ENCODE measurements at regions of chr3 and their contacts with region 1.

Region 1: GRCh38 chr3:128969993-128970739 is 23.7 kb downstream of the CFAP92 start:
- DNase-seq: peak; percentile 72
- H3K4me3 Mint-ChIP-seq: no peak overlapping the region
- H3K27ac Mint-ChIP-seq: no peak overlapping the region
- H3K4me1 Mint-ChIP-seq: peaks cover 3% of the 10 kb centered on the region
- H3K27me3 Mint-ChIP-seq: no peaks in the 10 kb centered on the region

Region 2: DNA sequence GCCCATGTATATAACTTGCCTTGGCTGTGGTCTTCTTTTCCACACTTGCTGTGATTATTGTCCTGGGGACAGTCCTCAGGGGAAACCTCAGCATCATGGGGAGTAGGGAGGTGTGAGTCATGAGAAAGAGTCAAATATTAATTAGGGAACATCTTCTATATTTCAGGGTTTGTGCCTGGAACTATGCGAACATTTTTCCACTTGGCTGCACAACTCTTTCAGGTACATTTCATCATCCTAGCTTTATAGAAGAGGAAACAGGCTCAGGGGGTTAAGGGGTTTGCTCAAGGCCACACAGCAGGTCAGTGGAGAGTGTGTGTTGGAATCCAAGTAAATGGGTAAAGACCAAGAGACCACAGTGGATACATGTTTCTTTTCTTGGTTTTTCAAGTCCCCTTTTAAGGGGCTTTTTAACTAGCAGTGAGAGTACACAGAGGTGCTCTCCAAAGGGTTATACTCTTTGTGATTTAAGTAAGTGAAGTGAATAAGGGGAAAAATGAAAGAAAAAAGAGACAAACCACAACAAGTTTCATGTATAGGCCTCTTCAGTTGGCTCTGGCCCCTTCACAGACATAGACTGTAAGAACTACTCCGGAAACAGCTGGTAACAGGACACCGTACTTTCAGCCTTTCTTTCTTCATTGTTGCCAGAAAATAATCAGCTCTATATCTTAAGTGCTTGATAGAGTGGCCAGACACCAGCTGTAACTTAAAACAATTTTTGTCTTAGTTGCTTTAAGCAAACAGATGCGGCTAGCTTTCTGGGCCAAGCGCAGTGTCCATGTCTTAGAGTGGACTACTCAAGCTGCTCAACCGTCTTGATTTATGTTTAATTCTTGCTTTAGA is 752.2 kb before region 1 on chr3:
- CTCF ChIA-PET with region 1: no interaction called
- POLR2A ChIA-PET with region 1: no interaction called
- intact Hi-C with region 1: no loop called
- DNase-seq: no peak
- H3K4me3 Mint-ChIP-seq: no peak overlapping the region
- H3K27ac Mint-ChIP-seq: no peak overlapping the region
- H3K4me1 Mint-ChIP-seq: peaks cover 7% of the 10 kb centered on the region
- H3K27me3 Mint-ChIP-seq: no peaks in the 10 kb centered on the region

Region 3: DNA sequence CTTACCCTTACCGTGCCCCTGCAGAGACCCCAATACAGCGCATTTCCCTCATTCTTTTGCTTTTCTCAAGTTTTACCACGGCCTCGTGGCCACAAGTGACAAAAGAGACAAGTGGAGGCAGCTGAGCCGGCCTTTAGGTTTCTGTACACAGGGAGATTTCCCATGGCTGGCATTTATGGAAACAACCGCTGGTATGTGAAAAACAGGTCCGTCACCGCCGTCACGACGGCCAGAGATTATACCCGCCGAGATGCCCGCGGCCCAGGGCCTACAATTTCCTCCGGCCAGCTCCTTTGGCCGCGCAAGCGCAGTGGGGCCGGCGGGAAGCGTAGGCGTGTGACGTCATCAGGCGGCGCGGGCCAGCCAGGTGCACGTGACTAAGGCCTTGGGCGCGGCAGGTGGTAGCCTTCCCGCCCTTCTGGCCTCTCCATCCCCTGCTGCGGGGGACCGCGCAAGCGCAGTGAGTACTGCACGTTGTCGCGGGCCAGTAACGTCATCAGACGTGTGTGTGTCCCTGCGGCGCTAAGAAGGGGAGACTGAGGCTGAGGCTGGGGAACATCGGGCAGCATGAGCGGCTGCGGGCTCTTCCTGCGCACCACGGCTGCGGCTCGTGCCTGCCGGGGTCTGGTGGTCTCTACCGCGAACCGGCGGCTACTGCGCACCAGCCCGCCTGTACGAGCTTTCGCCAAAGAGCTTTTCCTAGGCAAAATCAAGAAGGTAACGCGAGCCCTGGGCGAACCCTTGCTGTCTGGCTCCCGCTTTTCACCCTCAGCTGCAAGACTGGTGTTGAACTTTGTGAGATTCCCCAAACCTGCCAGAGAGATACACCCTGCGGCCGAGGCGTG is 90.8 kb before region 1 on chr3 and contains the start of gene ACAD9:
- CTCF ChIA-PET with region 1: interaction called, 20 read pairs
- POLR2A ChIA-PET with region 1: interaction called, 4 read pairs
- intact Hi-C with region 1: no loop called
- DNase-seq: peak; percentile 98
- H3K4me3 Mint-ChIP-seq: peak within 1 kb of the TSS; percentile 93
- H3K27ac Mint-ChIP-seq: peak within 1 kb of the TSS; percentile 95
- H3K4me1 Mint-ChIP-seq: peaks cover 61% of the 10 kb centered on the region
- H3K27me3 Mint-ChIP-seq: no peaks in the 10 kb centered on the region
- total RNA-seq, gene ACAD9: 45.3 to 45.5 TPM

Region 4: GRCh38 chr3:128993461-128994173 is 23.5 kb after region 1 on chr3 and contains the start of gene CFAP92:
- CTCF ChIA-PET with region 1: interaction called, 24 read pairs
- POLR2A ChIA-PET with region 1: no interaction called
- intact Hi-C with region 1: no loop called
- DNase-seq: peak; percentile 95
- H3K4me3 Mint-ChIP-seq: peak within 1 kb of the TSS; percentile 57
- H3K27ac Mint-ChIP-seq: no peak within 1 kb of the TSS
- H3K4me1 Mint-ChIP-seq: peaks cover 21% of the 10 kb centered on the region
- H3K27me3 Mint-ChIP-seq: no peaks in the 10 kb centered on the region
- total RNA-seq, gene CFAP92: 0.24 TPM in 1 of 2 experiments, not detected in the other

Region 5: DNA sequence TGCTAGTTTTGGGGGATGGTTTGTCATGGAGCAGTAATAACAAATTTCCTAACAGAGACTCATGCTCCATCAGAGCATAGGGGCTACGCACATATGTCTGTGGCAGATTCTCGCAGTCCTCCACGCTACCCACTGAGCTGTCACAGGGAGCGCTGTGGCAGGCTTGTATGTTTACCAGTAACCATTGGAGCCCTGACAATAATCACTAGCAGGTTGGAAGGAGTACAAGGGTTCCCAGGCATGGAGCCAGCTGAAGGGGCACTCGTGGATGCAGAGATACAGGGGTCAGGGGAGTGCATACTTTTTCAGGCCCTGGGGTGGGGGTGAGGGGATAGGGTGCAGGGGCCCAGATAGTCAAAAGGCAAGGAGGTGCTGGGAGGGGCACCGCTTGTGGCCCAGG is 82.5 kb after region 1 on chr3:
- CTCF ChIA-PET with region 1: interaction called, 60 read pairs
- POLR2A ChIA-PET with region 1: no interaction called
- intact Hi-C with region 1: loop called (anchors 5 kb)
- DNase-seq: no peak
- H3K4me3 Mint-ChIP-seq: no peak overlapping the region
- H3K27ac Mint-ChIP-seq: no peak overlapping the region
- H3K4me1 Mint-ChIP-seq: peaks cover 8% of the 10 kb centered on the region
- H3K27me3 Mint-ChIP-seq: no peaks in the 10 kb centered on the region

Region 6: DNA sequence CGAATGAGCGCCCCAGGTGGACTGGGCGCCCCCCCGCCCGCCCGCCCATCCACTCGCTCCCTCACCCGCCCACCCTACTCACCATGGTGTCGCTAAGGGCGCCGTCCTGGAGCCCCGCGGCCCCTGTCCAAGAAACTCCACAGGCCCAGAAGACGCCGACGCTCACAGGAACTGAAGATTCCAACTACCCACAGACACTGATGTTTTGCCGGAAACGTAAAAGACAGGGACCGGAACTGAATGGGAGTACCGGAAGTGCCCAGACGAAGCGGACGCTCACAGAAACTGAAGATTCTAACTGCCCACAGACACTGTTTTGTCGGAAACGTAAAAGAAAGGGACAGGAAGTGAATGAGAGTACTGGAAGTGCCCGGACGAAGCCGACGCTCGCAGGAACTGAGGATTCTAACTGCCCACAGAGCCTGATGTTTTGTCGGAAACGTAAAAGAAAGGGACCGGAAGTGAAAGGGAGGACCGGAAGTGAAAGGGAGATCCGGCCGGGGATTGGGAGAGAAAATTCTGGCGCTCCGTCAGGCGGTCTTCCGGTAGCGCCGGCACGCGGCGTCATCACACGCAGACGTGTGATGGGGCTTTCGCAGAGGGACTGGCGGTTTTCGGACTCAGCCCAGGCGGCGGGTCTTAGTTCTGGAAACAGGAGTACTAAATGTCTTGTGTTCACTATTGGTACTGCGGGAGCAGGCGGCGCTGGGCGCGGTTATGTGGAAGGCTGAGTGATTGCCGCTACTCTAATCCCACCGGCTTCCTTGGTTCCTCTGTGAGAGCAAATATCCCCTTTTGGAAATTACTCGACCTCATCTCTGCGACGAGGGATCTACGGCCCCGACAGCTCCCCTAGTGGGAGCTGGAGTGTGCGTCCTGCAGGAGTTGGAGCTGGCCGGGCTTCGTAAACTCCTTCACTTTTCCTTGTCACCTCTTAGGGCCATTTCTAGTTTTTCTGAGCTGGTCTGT is 191.0 kb after region 1 on chr3 and contains the start of gene ISY1:
- CTCF ChIA-PET with region 1: interaction called, 31 read pairs
- POLR2A ChIA-PET with region 1: no interaction called
- intact Hi-C with region 1: no loop called
- DNase-seq: peak; percentile 93
- H3K4me3 Mint-ChIP-seq: peak within 1 kb of the TSS; percentile 98
- H3K27ac Mint-ChIP-seq: peak within 1 kb of the TSS; percentile 100
- H3K4me1 Mint-ChIP-seq: peaks cover 31% of the 10 kb centered on the region
- H3K27me3 Mint-ChIP-seq: no peaks in the 10 kb centered on the region
- total RNA-seq, gene ISY1: 60.7 to 61.7 TPM

Region 7: GRCh38 chr3:129249276-129250065 is 279.3 kb after region 1 on chr3 and contains the start of gene COPG1:
- CTCF ChIA-PET with region 1: interaction called, 111 read pairs
- POLR2A ChIA-PET with region 1: no interaction called
- intact Hi-C with region 1: loop called (anchors 1 kb)
- DNase-seq: peak; percentile 92
- H3K4me3 Mint-ChIP-seq: peak within 1 kb of the TSS; percentile 89
- H3K27ac Mint-ChIP-seq: peak within 1 kb of the TSS; percentile 93
- H3K4me1 Mint-ChIP-seq: peaks cover 38% of the 10 kb centered on the region
- H3K27me3 Mint-ChIP-seq: no peaks in the 10 kb centered on the region
- total RNA-seq, gene COPG1: 154 to 162 TPM

Measured in activated CD4-positive, alpha-beta memory T cell treated with anti-CD3 and anti-CD28 coated beads for 36 hours (primary cell).